ENCODE measurements at regions of chr19 and their contacts with region 1.

Region 1: DNA sequence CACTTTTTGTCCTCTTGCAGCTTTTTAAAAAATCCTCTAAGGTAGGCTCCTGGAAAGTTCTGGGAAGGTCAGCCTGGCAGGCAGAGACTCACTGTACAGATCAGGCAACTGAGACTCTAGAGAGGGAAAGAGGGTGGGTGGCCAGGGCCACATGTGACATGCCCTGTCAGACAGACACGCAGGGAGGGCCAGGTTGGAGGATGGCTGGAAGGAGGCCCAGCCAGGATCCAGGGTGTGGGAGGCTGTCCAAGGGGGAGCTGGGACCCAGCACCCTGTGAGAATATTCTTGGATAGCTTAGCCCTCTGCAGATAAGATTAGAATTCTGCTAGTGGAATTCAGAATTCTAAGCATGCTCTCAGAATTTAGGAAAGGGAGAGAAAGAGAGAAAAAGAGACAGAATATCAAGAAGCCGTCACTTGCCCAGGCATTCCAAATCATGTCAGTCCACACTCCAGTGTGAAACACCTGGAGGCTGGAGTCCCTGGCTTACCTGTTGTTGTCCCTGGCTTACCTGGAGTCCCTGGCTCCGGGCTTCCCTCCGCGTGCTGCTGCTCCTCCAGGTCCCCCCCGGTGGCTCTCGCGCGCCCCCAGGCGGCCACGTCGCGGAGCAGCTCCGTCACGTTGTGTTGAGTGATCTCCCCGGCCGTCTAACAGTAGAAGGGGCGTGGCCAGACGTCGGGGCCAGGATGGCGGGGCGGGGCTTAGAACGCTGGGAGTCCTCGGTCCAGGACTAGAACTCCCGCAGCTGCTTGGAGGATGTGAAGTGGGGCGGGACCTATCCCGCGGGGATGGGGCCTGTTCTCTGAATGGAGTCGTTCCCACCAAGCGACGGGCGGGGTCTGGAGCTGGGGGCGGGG is 2.8 kb upstream of the TNNI3 start:
- DNase-seq: peak; percentile 98
- H3K4me3 ChIP-seq: no peak overlapping the region
- H3K27ac ChIP-seq: no peak overlapping the region
- H3K4me1 ChIP-seq: peaks cover 19% of the 10 kb centered on the region
- H3K27me3 ChIP-seq: peaks cover 10% of the 10 kb centered on the region
- CTCF ChIP-seq: peak; percentile 99

Region 2: DNA sequence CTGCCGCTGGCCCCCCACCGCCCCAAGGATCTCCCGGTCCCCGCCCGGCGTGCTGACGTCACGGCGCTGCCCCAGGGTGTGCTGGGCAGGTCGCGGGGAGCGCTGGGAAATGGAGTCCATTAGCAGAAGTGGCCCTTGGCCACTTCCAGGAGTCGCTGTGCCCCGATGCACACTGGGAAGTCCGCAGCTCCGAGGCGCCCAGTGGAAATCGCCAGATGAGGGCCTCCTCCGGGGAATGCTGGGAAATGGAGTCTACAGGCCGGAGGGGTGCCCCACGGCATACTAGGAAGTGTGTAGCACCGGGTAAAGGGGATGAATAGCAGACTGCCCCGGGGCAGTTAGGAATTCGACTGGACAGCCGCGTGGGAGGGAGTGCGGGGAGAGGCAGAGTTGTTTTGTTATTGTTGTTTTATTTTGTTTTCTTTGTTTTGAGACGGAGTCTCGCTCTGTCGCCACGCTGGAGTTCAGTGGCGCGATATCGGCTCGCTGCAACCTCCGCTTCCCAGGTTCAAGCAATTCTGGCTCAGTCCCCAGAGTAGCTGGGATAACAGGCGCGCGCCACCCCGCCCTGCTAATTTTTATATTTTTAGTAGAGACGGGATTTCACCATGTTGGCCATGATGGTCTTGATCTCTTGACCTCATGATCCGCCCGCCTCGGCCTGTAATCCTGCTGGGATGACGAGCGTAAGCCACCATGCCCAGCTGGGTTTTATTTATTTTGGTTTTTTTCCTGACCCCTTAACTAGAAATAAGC is 42.5 kb before region 1 on chr19 and contains the start of gene PPP1R12C:
- CTCF ChIA-PET with region 1: no interaction called
- POLR2A ChIA-PET with region 1: no interaction called
- intact Hi-C with region 1: no loop called
- DNase-seq: peak; percentile 99
- H3K4me3 ChIP-seq: peak within 1 kb of the TSS; percentile 94
- H3K27ac ChIP-seq: peak within 1 kb of the TSS; percentile 79
- H3K4me1 ChIP-seq: peaks cover 15% of the 10 kb centered on the region
- H3K27me3 ChIP-seq: no peaks in the 10 kb centered on the region
- CTCF ChIP-seq: no peak
- total RNA-seq, gene PPP1R12C: 85.7 and 94.6 TPM in 2 replicates

Region 3: GRCh38 chr19:55289117-55289796 is 128.9 kb after region 1 on chr19:
- CTCF ChIA-PET with region 1: interaction called, 10 read pairs
- POLR2A ChIA-PET with region 1: no interaction called
- intact Hi-C with region 1: no loop called
- DNase-seq: peak; percentile 48
- H3K4me3 ChIP-seq: no peak overlapping the region
- H3K27ac ChIP-seq: no peak overlapping the region
- H3K4me1 ChIP-seq: no peaks in the 10 kb centered on the region
- H3K27me3 ChIP-seq: no peaks in the 10 kb centered on the region
- CTCF ChIP-seq: no peak

Region 4: GRCh38 chr19:55353803-55354697 is 193.7 kb after region 1 on chr19:
- CTCF ChIA-PET with region 1: interaction called, 11 read pairs
- POLR2A ChIA-PET with region 1: no interaction called
- intact Hi-C with region 1: no loop called
- DNase-seq: peak; percentile 73
- H3K4me3 ChIP-seq: peak overlapping the region; percentile 56
- H3K27ac ChIP-seq: no peak overlapping the region
- H3K4me1 ChIP-seq: peaks cover 6% of the 10 kb centered on the region
- H3K27me3 ChIP-seq: peaks cover 32% of the 10 kb centered on the region
- CTCF ChIP-seq: no peak

Region 5: DNA sequence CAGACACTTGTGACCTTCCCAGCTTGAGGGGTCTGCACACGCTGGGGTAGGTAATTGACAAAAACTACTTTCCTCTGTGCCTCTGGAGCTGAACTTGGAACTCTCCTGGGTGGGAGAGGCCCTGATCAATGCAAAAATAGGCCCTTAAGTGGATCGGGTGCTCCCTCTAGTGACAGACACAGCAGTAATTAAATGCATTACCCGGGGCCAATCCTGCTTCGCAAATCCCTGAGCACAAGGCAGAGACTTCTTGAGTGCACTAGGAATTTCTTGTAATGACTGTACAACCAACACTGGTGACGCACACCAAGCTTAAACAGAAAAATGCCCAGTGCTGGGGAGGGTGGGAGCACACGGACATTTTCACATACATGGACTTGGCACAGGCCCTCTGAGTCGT is 257.8 kb after region 1 on chr19:
- CTCF ChIA-PET with region 1: interaction called, 11 read pairs
- POLR2A ChIA-PET with region 1: no interaction called
- intact Hi-C with region 1: no loop called
- DNase-seq: peak; percentile 87
- H3K4me3 ChIP-seq: no peak overlapping the region
- H3K27ac ChIP-seq: no peak overlapping the region
- H3K4me1 ChIP-seq: no peaks in the 10 kb centered on the region
- H3K27me3 ChIP-seq: no peaks in the 10 kb centered on the region
- CTCF ChIP-seq: peak; percentile 85

Region 6: DNA sequence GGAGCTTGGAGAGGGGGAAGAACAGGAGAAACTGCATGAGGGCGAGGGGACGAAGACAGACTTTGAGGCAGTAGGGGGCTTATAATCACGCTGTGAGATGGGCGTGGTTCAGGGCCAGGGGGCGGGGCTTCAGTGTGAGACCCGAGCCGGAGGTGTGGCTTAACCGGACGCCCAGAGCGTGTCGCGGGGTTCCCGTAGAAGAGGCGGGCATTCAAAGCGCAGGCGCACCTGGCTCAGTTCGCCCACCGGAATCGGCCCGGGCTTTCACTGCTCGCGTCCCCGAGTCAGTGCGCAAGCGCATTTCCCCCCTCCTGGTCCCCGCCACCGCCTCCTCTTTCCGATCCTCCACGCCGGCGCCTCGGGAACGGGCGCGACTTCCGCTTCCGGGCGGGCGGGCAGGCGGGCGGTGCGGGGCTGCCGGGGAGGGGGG is 444.9 kb after region 1 on chr19:
- CTCF ChIA-PET with region 1: interaction called, 20 read pairs
- POLR2A ChIA-PET with region 1: no interaction called
- intact Hi-C with region 1: no loop called
- DNase-seq: peak; percentile 99
- H3K4me3 ChIP-seq: peak overlapping the region; percentile 96
- H3K27ac ChIP-seq: peak overlapping the region; percentile 93
- H3K4me1 ChIP-seq: peaks cover 21% of the 10 kb centered on the region
- H3K27me3 ChIP-seq: no peaks in the 10 kb centered on the region
- CTCF ChIP-seq: no peak

Measured in A673 (cell line).